Activated CD4-positive, alpha-beta T cell treated with anti-CD3 and anti-CD28 coated beads for 36 hours (primary cell): ENCODE measurements at regions of chr1 and their contacts with region 1.

Region 1: DNA sequence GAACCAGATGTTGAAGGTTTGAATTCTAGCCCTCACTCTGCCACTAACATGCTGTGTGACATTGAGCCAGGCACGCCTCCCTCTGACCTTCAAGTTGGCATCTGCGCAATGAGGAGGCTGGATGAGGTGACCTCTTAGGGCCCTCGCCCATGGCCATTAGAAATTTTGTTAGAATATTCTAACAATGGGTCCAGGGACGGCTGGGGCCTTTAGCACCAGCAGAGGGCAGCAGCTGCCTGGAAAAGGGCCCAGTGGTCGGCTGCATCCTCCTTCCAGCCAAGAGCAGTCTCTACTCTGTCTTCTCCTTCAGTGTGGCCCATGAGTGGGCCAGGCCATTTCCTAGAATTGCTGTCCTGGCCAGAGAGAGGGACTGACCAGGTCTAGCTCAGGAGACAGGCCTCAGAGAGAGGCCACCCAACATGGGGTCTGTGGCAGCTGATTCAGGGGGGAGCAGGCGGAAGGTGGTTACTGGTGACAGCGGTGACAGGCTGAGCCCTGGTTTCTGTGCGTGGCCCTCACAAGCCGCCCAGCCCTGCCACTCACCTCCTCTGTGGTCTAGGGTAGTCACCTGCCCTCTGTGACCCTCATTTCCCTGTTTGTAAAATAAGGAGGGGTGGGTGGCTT is 101.3 kb upstream of the ACTL8 start:
- DNase-seq: peak; percentile 56
- ATAC-seq: no peak
- H3K4me3 Mint-ChIP-seq: no peak overlapping the region
- H3K27ac Mint-ChIP-seq: no peak overlapping the region
- H3K4me1 Mint-ChIP-seq: no peaks in the 10 kb centered on the region
- H3K27me3 Mint-ChIP-seq: peaks cover 2% of the 10 kb centered on the region

Region 2: DNA sequence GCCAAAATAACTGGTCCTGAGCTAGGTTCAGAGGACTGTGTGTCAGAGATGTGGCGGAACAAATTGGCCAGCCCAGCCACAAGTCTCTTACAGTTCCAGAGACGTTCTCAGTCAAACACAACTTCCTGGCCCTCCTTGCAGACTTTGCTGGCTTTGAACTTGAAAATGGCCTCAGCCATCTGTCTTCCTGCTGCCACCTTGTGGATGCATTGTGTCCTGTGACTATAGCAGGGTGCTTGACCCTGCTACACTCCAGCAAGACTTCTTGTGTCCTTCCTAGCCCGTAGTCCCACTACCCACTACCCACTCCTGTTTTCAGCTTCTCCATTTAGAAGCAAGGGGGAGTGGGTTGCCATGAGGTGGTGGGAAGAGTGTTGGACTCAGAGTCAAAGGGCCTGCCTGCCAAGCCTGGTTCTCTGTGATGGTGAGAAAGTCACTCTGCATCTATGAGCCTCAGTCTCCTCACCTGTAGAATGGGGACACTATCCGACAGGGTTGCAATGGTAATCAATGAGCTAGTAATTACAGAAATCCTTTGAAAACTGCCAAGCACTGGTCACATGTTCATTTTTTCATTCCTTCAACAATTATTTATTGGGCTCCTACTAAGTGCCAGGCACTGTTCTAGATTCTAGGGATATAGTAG is 563.7 kb after region 1 on chr1:
- CTCF ChIA-PET with region 1: no interaction called
- POLR2A ChIA-PET with region 1: no interaction called
- intact Hi-C with region 1: loop called in 1 of 2 experiments (anchors 10 kb)
- DNase-seq: peak; percentile 31
- ATAC-seq: no peak
- H3K4me3 Mint-ChIP-seq: no peak overlapping the region
- H3K27ac Mint-ChIP-seq: no peak overlapping the region
- H3K4me1 Mint-ChIP-seq: no peaks in the 10 kb centered on the region
- H3K27me3 Mint-ChIP-seq: peaks cover 15% of the 10 kb centered on the region